Psoas muscle (tissue), 8 donors: ENCODE measurements at regions of chr20 and their contacts with region 1.

Region 1: DNA sequence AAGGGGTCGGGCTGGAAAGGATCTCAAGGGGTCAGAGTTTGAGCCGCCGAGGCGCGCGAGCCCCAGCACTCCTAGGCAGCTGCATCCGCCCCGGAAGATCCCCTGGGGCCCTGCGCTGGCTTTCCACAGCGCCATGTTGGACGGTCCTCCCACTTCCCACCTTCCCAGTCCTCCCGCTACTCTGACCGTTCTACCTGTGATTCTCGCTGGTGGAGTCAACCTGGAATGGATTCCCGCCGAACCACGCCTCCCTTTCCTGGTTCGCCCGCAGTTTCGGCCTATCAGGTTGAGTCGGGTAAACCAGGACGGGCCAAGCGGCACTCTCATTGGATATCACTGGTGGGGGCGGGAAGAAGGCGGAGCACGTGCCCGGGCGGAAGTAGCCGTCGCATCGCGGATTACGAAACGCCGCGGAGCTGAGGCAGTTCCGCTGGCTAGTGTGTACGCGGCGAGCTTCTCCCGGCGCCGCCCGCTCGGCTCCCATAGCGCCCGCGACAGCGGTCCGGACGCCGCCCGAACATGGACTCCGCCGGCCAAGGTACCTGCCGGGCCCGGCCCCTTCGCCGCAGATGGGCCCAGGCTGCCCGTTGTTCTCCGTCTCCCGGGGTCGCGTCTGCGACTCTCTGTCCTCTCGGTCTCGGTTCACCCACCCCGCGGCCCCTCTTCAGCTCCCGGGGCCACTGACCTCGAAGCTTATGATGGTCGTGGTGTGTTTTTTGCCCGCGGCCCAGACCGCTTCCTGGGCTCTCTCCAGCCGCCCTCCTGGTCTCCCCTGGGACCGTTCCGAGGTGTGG is at the start of gene TPD52L2:
- DNase-seq: peak; percentile 99
- ATAC-seq: peak; percentile 94 to 97 (median 94)
- H3K4me3 ChIP-seq: peak within 1 kb of the TSS; percentile 99
- H3K27ac ChIP-seq: peak within 1 kb of the TSS; percentile 96
- H3K4me1 ChIP-seq: peaks cover 14% of the 10 kb centered on the region
- H3K27me3 ChIP-seq: no peaks in the 10 kb centered on the region
- CTCF ChIP-seq: no peak
- total RNA-seq, gene TPD52L2: 40.7 to 56.0 (median 55.1) TPM

Region 2: GRCh38 chr20:63718996-63719395 is 146.0 kb before region 1 on chr20:
- intact Hi-C with region 1: no loop called
- DNase-seq: no peak
- ATAC-seq: no peak
- H3K4me3 ChIP-seq: no peak overlapping the region
- H3K27ac ChIP-seq: no peak overlapping the region
- H3K4me1 ChIP-seq: no peaks in the 10 kb centered on the region
- H3K27me3 ChIP-seq: no peaks in the 10 kb centered on the region
- CTCF ChIP-seq: no peak

Region 3: GRCh38 chr20:63785691-63786131 is 79.3 kb before region 1 on chr20:
- intact Hi-C with region 1: loop called in 1 of 2 experiments (anchors 1 kb)
- DNase-seq: no peak
- ATAC-seq: no peak
- H3K4me3 ChIP-seq: no peak overlapping the region
- H3K27ac ChIP-seq: no peak overlapping the region
- H3K4me1 ChIP-seq: no peaks in the 10 kb centered on the region
- H3K27me3 ChIP-seq: no peaks in the 10 kb centered on the region
- CTCF ChIP-seq: no peak

Region 4: GRCh38 chr20:63894358-63895201 is 29.5 kb after region 1 on chr20 and contains the start of gene DNAJC5:
- intact Hi-C with region 1: loop called in 1 of 2 experiments (anchors 1 kb)
- DNase-seq: peak; percentile 96 to 98
- ATAC-seq: peak; percentile 93 to 95 (median 94)
- H3K4me3 ChIP-seq: peak within 1 kb of the TSS; percentile 70
- H3K27ac ChIP-seq: peak within 1 kb of the TSS; percentile 79
- H3K4me1 ChIP-seq: peaks cover 21% of the 10 kb centered on the region
- H3K27me3 ChIP-seq: no peaks in the 10 kb centered on the region
- CTCF ChIP-seq: no peak
- total RNA-seq, gene DNAJC5: 20.4 to 27.3 (median 23.3) TPM